ENCODE measurements at regions of chr17 and their contacts with region 1.

Region 1: DNA sequence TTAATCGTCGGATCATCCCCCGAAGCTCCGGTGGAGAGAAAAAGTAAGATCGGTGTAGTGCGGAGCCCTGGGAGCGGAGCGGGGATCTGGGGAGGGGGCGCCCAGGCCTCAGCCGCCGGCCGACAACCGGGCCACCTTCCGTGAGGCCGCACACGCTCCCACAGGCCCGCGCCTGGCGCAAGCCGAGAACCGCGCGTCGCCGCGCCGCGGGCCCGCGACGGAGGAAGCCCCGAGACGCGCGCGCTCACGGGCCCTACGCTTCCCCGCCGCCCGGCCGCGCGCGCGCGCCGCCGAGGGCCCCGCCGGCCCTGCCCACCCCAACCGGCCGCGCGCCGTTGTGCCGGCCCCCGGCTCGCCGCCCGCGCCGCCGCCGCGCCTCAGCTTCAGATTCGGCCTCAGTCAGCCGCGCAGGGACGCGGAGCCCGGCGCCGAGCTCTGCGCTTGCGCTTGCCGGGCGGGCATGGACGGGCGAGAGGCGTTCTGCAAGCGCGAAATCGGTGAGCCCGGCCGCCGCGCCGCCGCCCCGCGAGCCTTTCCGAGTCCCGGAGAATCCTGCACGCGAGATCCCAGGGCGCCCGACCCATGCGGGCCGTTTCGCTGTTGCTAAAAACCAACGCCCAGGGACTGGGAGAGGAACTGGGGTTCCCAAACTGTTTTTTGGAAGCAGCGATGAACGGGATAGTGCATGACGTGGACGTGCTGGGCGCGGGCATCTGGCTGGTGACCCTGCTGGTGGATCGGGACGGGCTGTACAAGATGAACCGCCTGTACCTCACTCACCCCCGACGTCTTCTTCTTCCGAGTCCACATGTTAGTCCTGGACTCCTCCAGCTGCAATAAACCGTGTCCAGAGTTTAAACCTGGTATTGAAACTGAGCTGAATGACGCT is 28.0 kb upstream of the LRRC37A start:
- DNase-seq: peak; percentile 48 to 93 (median 71)
- ATAC-seq: peak; percentile 77 to 92 (median 88)
- H3K4me3 ChIP-seq: peak overlapping the region; percentile 70 to 91
- H3K4me3 Mint-ChIP-seq: peak overlapping the region; percentile 88 to 90 (median 90)
- H3K27ac ChIP-seq: peak overlapping the region; percentile 81
- H3K27ac Mint-ChIP-seq: peak overlapping the region; percentile 93 to 96
- H3K4me1 ChIP-seq: peaks cover 18 to 37% of the 10 kb centered on the region in 2 experiments
- H3K4me1 Mint-ChIP-seq: peaks cover 29 to 38% (median 33%) of the 10 kb centered on the region in 3 donors
- H3K27me3 ChIP-seq: peaks cover 0 to 2% of the 10 kb centered on the region in 2 experiments
- H3K27me3 Mint-ChIP-seq: peaks cover 0 to 7% of the 10 kb centered on the region in 2 donors

Region 2: GRCh38 chr17:46020023-46020761 is 246.7 kb before region 1 on chr17:
- CTCF ChIA-PET with region 1: interaction called in 1 of 2 experiments, 10 read pairs
- POLR2A ChIA-PET with region 1: interaction called in 1 of 2 experiments, 5 read pairs
- DNase-seq: peak; percentile 30 to 82 (median 68)
- ATAC-seq: peak; percentile 96 to 99 (median 98)
- H3K4me3 ChIP-seq: no peak overlapping the region
- H3K4me3 Mint-ChIP-seq: peak overlapping the region in 1 of 3 donors; percentile 22
- H3K27ac ChIP-seq: peak overlapping the region; percentile 88
- H3K27ac Mint-ChIP-seq: peak overlapping the region; percentile 95 to 96
- H3K4me1 ChIP-seq: peaks cover 0 to 41% of the 10 kb centered on the region in 2 experiments
- H3K4me1 Mint-ChIP-seq: peaks cover 12 to 36% (median 22%) of the 10 kb centered on the region in 3 donors
- H3K27me3 ChIP-seq: no peaks in the 10 kb centered on the region
- H3K27me3 Mint-ChIP-seq: no peaks in the 10 kb centered on the region

Region 3: GRCh38 chr17:46049656-46050055 is 217.2 kb before region 1 on chr17:
- CTCF ChIA-PET with region 1: no interaction called
- POLR2A ChIA-PET with region 1: no interaction called
- DNase-seq: no peak
- ATAC-seq: no peak
- H3K4me3 ChIP-seq: no peak overlapping the region
- H3K4me3 Mint-ChIP-seq: no peak overlapping the region
- H3K27ac ChIP-seq: no peak overlapping the region
- H3K27ac Mint-ChIP-seq: no peak overlapping the region
- H3K4me1 ChIP-seq: no peaks in the 10 kb centered on the region
- H3K4me1 Mint-ChIP-seq: peaks cover 20 to 30% (median 26%) of the 10 kb centered on the region in 3 donors
- H3K27me3 ChIP-seq: no peaks in the 10 kb centered on the region
- H3K27me3 Mint-ChIP-seq: no peaks in the 10 kb centered on the region

Region 4: DNA sequence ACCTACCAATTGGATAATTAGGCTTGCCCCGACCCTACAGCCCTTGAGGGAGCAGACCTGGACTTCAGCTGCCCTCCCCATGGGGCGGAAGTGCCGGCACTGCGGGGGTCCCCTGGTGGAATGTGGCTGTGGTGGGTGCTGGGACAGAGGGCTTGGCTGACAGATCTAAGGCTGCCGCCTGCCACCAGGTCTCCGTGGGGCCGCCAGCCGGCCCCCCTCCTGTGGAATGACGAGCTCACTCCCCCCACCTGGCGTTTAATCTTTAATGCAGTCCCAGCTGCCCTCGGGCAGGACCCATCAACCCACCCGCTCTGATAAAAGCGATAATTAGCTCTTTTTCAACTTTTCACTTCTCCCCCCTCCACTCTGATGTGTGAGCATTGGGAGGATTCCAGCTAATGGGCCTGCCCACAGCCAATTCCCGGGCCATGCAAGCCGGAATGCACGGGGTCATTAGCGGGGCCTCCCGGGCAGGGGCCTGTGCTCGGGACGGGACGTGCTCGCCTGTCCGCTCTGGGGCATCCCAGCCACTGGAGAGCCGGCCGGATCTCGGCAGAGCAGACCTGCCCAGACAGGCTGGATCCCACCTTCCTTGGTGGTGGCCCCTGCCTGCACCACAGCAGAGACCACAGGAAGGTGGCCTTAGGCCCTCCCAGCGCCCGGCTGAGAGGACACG is 627.7 kb after region 1 on chr17:
- CTCF ChIA-PET with region 1: no interaction called
- POLR2A ChIA-PET with region 1: no interaction called
- DNase-seq: no peak
- ATAC-seq: no peak
- H3K4me3 ChIP-seq: no peak overlapping the region
- H3K4me3 Mint-ChIP-seq: no peak overlapping the region
- H3K27ac ChIP-seq: no peak overlapping the region
- H3K27ac Mint-ChIP-seq: no peak overlapping the region
- H3K4me1 ChIP-seq: no peaks in the 10 kb centered on the region
- H3K4me1 Mint-ChIP-seq: no peaks in the 10 kb centered on the region
- H3K27me3 ChIP-seq: peaks cover 0 to 51% of the 10 kb centered on the region in 2 experiments
- H3K27me3 Mint-ChIP-seq: peaks cover 12 to 27% of the 10 kb centered on the region in 2 donors